Pancreas (tissue), 10 donors: ENCODE measurements at regions of chr5 and their contacts with region 1.

Region 1: DNA sequence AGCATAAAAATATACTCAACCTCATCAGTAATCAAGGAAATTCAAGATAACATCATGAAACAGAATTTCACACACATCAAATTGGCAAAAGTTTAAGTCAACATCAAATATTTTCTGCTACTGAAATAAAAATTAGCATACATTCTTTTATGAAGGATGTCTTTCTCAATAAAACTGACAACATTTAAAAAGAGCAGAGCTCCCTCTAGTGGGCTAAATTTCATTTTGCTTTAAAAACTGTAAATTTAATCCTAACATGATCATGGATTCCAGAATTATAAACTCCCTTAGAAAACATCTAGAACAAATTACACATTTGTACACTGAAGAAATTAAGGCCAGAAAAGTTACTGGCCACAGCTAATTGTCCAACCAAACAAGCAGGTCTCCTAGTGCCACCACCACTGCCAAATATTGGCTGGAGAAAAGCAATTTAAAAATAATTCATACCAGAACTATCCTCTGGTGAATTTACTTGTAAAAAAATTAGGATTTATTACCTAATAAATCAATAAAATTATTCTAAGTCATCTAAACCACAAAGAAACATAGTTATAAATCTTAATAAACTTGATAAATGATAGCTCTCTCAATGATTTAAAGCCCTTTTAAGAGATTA is 31.2 kb downstream of the DEPDC1B start:
- DNase-seq: no peak
- ATAC-seq: no peak
- H3K4me3 ChIP-seq: no peak overlapping the region
- H3K27ac ChIP-seq: no peak overlapping the region
- H3K4me1 ChIP-seq: peaks cover 13 to 16% (median 14%) of the 10 kb centered on the region in 3 donors
- H3K27me3 ChIP-seq: no peaks in the 10 kb centered on the region
- CTCF ChIP-seq: peak; percentile 16 to 61 (median 45)

Region 2: DNA sequence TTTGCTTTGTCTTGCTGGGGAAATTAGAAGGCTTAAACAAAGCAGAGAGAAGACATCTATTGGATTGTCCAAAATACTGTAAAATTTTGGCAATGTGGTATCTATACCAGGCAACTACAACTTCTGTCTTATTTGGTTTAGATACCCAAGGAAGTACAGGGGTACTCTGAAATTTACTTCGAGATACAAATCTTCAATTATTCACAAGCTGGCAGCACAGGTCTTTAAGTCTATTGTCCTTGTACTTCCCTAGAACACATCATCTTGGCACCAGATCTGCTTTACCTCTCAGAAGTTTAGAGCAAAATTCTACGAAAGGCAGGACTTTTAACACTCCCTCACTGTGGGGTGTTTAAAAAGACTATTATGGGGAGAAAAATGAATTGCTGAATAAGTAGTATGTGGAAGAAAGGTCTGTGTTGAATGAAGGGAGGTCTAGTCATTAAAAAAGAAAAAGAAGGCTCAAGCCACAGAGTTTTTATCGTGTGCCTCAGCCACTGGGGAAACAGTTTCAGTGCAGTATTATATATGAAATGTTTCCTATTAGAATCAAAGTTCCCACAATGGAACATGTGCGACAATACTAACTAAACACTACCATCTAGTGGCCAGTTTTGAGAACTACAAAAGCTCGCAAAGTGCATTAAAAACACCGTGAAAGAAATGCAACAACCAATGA is 869.0 kb before region 1 on chr5:
- intact Hi-C with region 1: loop called in 1 of 3 experiments (anchors 10 kb)
- DNase-seq: peak in 1 of 6 donors; percentile 37
- ATAC-seq: peak; percentile 71 to 96 (median 90)
- H3K4me3 ChIP-seq: no peak overlapping the region
- H3K27ac ChIP-seq: peak overlapping the region in 2 of 4 donors; percentile 10 to 56
- H3K4me1 ChIP-seq: peaks cover 0 to 12% (median 0%) of the 10 kb centered on the region in 3 donors
- H3K27me3 ChIP-seq: no peaks in the 10 kb centered on the region
- CTCF ChIP-seq: peak; percentile 60 to 78 (median 71)